Heart left ventricle (tissue), 16 donors: ENCODE measurements at regions of chr1 and their contacts with region 1.

Region 1: DNA sequence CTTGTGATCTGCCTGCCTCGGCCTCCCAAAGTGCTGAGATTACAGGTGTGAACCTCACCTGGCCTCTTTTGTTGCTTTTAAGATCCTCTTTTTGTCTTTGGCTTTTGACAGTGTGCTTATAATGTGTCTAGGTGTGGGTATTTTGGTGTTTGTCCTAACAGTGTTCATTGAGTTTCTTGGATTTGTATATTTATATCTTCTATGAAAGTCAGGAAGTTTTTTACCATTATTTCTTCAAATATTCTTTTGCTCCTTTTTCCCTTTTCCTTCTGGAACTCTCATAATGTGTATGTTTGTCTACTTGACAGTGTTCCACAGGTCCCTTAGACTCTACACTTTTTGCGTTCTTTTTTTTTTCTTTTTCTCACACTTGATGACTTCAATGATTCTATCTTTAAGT is 59.1 kb downstream of the URB2 start:
- DNase-seq: no peak
- ATAC-seq: no peak
- H3K4me3 ChIP-seq: no peak overlapping the region
- H3K27ac ChIP-seq: no peak overlapping the region
- H3K4me1 ChIP-seq: no peaks in the 10 kb centered on the region
- H3K27me3 ChIP-seq: no peaks in the 10 kb centered on the region
- CTCF ChIP-seq: no peak
- POLR2A ChIP-seq: no peak

Region 2: DNA sequence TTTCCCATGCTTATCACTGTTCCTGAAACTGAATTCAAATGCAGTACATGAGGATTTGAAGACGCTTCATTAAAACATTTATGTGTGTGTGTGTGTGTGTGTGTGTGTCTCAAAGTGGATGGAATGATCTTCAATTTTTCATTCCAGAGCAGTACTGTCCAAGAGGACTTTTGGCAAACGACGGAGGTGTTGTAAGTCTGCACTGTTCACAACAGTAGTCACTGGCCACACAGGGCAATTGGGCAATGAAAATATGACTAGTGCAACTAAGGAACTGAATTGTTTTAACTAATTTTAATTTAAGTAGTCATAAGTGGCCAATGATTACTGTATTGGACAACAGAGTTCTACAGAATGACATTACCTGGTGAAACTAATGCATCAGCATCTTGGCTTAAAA is 64.3 kb before region 1 on chr1:
- intact Hi-C with region 1: no loop called
- DNase-seq: no peak
- ATAC-seq: peak in 3 of 4 donors; percentile 12 to 46 (median 23)
- H3K4me3 ChIP-seq: no peak overlapping the region
- H3K27ac ChIP-seq: no peak overlapping the region
- H3K4me1 ChIP-seq: peaks cover 2 to 55% (median 37%) of the 10 kb centered on the region in 12 donors
- H3K27me3 ChIP-seq: no peaks in the 10 kb centered on the region
- CTCF ChIP-seq: no peak
- POLR2A ChIP-seq: no peak

Region 3: GRCh38 chr1:229674042-229674441 is 11.1 kb before region 1 on chr1:
- intact Hi-C with region 1: loop called in 1 of 10 experiments (anchors 1 kb)
- DNase-seq: no peak
- ATAC-seq: no peak
- H3K4me3 ChIP-seq: no peak overlapping the region
- H3K27ac ChIP-seq: no peak overlapping the region
- H3K4me1 ChIP-seq: peaks cover 0 to 5% (median 0%) of the 10 kb centered on the region in 12 donors
- H3K27me3 ChIP-seq: no peaks in the 10 kb centered on the region
- CTCF ChIP-seq: no peak
- POLR2A ChIP-seq: no peak

Region 4: DNA sequence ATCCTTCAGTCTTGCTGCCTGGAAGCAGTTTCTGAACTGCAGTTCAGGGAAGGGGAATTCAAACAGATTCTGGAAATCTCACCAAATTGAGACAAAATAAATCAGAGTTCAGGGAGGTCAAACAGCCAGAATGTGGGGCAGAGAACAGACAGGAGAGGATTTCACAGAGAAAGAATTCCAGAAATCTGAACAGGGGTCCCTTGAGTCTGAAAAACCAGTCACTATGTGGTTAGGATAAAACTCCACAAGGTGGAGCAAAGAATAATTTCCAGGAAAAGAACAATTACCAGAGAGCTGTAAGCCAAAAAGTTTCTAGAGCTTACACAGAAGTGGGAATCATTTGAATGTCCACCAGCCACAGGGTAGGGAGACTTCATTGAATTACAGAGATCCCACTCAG is 25.6 kb after region 1 on chr1:
- intact Hi-C with region 1: no loop called
- DNase-seq: no peak
- ATAC-seq: peak in 1 of 4 donors; percentile 61
- H3K4me3 ChIP-seq: no peak overlapping the region
- H3K27ac ChIP-seq: peak overlapping the region in 1 of 12 donors; percentile 52
- H3K4me1 ChIP-seq: no peaks in the 10 kb centered on the region
- H3K27me3 ChIP-seq: no peaks in the 10 kb centered on the region
- CTCF ChIP-seq: no peak
- POLR2A ChIP-seq: no peak